Heart right ventricle (tissue), 16 donors: ENCODE measurements at regions of chr12 and their contacts with region 1.

Region 1: GRCh38 chr12:3236345-3237187 is 159.4 kb downstream of the TSPAN9 start:
- DNase-seq: peak in 1 of 2 donors; percentile 71
- ATAC-seq: peak; percentile 59 to 85 (median 76)
- H3K4me3 ChIP-seq: no peak overlapping the region
- H3K27ac ChIP-seq: peak overlapping the region; percentile 78 to 99 (median 89)
- H3K4me1 ChIP-seq: peaks cover 5 to 96% (median 67%) of the 10 kb centered on the region in 9 donors
- H3K27me3 ChIP-seq: no peaks in the 10 kb centered on the region
- CTCF ChIP-seq: no peak

Region 2: DNA sequence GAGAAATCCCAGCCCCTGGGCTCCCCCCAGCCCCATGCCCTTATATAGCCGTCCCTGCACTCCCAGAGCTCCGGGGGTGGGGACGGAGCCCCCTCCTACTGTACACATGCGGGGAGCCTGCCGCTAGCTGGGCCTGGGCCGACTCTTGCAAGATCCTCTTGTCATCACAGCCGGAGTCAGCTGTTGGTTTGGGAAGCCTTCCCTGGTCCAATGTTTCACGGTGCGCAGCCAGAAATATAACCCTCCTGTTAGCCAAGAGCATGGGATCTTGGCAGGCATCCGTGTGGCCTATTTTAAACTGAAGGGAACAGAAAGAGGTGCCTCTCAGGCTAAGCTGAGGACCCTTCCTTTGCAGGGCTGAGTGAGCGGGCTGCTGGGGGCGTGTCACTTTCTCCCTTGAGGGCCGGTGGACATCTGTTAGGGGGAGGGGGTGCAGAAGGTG is 15.9 kb after region 1 on chr12:
- intact Hi-C with region 1: loop called in 1 of 10 experiments (anchors 2 kb)
- DNase-seq: peak; percentile 81 to 93
- ATAC-seq: peak; percentile 50 to 68 (median 60)
- H3K4me3 ChIP-seq: peak overlapping the region in 1 of 10 donors; percentile 0
- H3K27ac ChIP-seq: peak overlapping the region; percentile 76 to 99 (median 89)
- H3K4me1 ChIP-seq: peaks cover 62 to 100% (median 87%) of the 10 kb centered on the region in 9 donors
- H3K27me3 ChIP-seq: no peaks in the 10 kb centered on the region
- CTCF ChIP-seq: no peak

Region 3: GRCh38 chr12:3350422-3350821 is 113.9 kb after region 1 on chr12:
- intact Hi-C with region 1: no loop called
- DNase-seq: no peak
- ATAC-seq: peak in 2 of 8 donors; percentile 25 to 53
- H3K4me3 ChIP-seq: no peak overlapping the region
- H3K27ac ChIP-seq: no peak overlapping the region
- H3K4me1 ChIP-seq: peaks cover 0 to 11% (median 3%) of the 10 kb centered on the region in 9 donors
- H3K27me3 ChIP-seq: peaks cover 0 to 16% (median 0%) of the 10 kb centered on the region in 7 donors
- CTCF ChIP-seq: no peak